ENCODE measurements at regions of chr7 and their contacts with region 1.

Region 1: DNA sequence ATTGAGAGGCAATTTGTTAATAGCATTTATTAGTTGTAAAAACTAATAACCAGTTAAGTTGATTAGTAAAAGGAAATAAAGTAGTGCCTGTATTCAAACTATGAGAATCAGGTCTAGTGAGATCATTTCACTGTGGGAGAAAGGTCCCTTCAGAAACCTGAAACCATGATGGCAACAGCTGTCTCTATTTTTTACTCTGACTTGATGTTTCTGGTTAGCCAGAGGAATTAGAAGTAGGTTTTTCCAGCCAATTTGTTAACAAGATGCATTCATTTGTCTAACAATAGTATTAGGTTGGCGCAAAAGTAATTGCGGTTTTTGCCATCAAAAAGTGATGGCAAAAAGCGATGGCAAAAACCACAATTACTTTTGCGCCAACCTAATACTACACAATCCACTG is 272.2 kb upstream of the YAE1 start:
- DNase-seq: no peak
- H3K4me3 ChIP-seq: no peak overlapping the region
- H3K27ac ChIP-seq: no peak overlapping the region
- H3K4me1 ChIP-seq: no peaks in the 10 kb centered on the region
- H3K27me3 ChIP-seq: no peaks in the 10 kb centered on the region
- CTCF ChIP-seq: no peak
- EP300 ChIP-seq: no peak
- POLR2A ChIP-seq: no peak

Region 2: DNA sequence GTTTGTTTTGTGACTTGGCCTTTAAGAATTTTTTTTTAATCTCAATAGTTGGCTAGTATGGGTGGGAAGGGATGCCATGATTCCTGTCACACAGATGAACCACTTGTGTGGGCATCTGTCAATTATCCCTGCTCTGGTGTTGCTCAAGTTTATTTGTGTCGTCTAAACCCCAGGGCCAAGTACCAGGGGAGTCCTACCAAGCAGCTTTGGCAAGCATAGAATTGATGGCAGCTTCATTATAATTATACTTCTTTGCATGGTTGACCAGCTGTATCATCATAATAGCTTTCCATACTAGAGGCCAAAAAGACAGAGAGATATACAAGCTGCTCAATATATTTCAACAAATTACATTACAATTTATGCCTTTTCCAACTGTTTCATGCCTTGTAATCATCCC is 871.2 kb after region 1 on chr7:
- in situ Hi-C with region 1: no loop called
- intact Hi-C with region 1: loop called (anchors 5 kb)
- DNase-seq: no peak
- H3K4me3 ChIP-seq: no peak overlapping the region
- H3K27ac ChIP-seq: no peak overlapping the region
- H3K4me1 ChIP-seq: no peaks in the 10 kb centered on the region
- H3K27me3 ChIP-seq: no peaks in the 10 kb centered on the region
- CTCF ChIP-seq: no peak
- EP300 ChIP-seq: no peak
- POLR2A ChIP-seq: no peak

Measured in transverse colon (tissue), 4 donors.